Activated T-helper 1 cell treated with anti-CD3 and anti-CD28 coated beads, Interleukin-12 subunit alpha, Interleukin-12 subunit beta, Interleukin-2, Interleukin-4 antibody, amounts not matched to agents 30 ng/mL and 10 ng/mL and 1 ng/mL, durations not matched to agents 14 hours and 24 hours and 36 hours (primary cell): ENCODE measurements at regions of chr9 and their contacts with region 1.

Region 1: GRCh38 chr9:20319641-20320337 is 302.5 kb downstream of the MLLT3 start:
- DNase-seq: peak; percentile 37
- H3K4me3 Mint-ChIP-seq: peak overlapping the region; percentile 35
- H3K27ac Mint-ChIP-seq: peak overlapping the region; percentile 91
- H3K4me1 Mint-ChIP-seq: peaks cover 91% of the 10 kb centered on the region
- H3K27me3 Mint-ChIP-seq: no peaks in the 10 kb centered on the region

Region 2: DNA sequence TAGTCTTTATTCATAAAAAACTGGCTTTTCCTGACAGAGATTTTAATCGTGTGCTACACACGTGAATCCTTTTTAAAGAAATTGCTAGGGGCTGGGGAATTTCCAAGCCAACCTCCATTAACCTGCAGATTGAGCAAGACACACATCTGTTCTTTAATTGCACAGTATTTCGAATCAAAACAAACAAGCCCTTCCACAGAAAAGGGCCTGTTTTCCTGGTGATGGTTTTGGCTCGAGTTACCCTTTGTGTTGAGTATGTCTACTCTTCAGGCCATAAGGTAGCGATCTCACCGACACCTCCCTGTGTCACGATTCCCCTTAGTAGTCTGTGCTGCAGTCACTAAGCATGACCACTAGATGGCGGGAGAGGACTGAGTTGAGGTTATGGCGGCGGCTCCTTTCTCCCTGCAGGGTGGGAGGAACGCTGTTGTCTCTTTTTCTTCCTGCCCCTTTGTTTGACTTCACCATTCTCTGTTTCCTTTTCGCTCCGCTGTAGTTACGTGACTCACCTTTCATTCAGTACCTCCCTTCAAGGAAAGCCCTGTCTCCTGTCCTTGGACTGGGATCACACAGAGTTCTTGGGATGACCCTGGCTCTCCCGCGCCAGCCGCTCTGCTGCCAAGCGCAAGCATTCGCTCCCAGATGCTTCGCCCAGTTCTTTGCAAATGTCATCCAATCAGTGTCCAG is 393.8 kb before region 1 on chr9:
- intact Hi-C with region 1: loop called (anchors 5 kb)
- DNase-seq: peak; percentile 79
- H3K4me3 Mint-ChIP-seq: peak overlapping the region; percentile 65
- H3K27ac Mint-ChIP-seq: peak overlapping the region; percentile 2
- H3K4me1 Mint-ChIP-seq: peaks cover 28% of the 10 kb centered on the region
- H3K27me3 Mint-ChIP-seq: peaks cover 2% of the 10 kb centered on the region

Region 3: GRCh38 chr9:20043035-20043434 is 276.8 kb before region 1 on chr9:
- intact Hi-C with region 1: loop called (anchors 5 kb)
- DNase-seq: no peak
- H3K4me3 Mint-ChIP-seq: peak overlapping the region; percentile 78
- H3K27ac Mint-ChIP-seq: peak overlapping the region; percentile 79
- H3K4me1 Mint-ChIP-seq: peaks cover 45% of the 10 kb centered on the region
- H3K27me3 Mint-ChIP-seq: no peaks in the 10 kb centered on the region

Region 4: GRCh38 chr9:20256284-20256948 is 63.4 kb before region 1 on chr9:
- intact Hi-C with region 1: loop called (anchors 2 kb)
- DNase-seq: no peak
- H3K4me3 Mint-ChIP-seq: no peak overlapping the region
- H3K27ac Mint-ChIP-seq: peak overlapping the region; percentile 11
- H3K4me1 Mint-ChIP-seq: peaks cover 40% of the 10 kb centered on the region
- H3K27me3 Mint-ChIP-seq: no peaks in the 10 kb centered on the region

Region 5: GRCh38 chr9:20280330-20280729 is 39.5 kb before region 1 on chr9:
- intact Hi-C with region 1: no loop called
- DNase-seq: no peak
- H3K4me3 Mint-ChIP-seq: no peak overlapping the region
- H3K27ac Mint-ChIP-seq: no peak overlapping the region
- H3K4me1 Mint-ChIP-seq: peaks cover 10% of the 10 kb centered on the region
- H3K27me3 Mint-ChIP-seq: no peaks in the 10 kb centered on the region

Region 6: GRCh38 chr9:20552874-20553575 is 233.2 kb after region 1 on chr9:
- intact Hi-C with region 1: loop called (anchors 5 kb)
- DNase-seq: peak; percentile 1
- H3K4me3 Mint-ChIP-seq: peak overlapping the region; percentile 59
- H3K27ac Mint-ChIP-seq: peak overlapping the region; percentile 64
- H3K4me1 Mint-ChIP-seq: peaks cover 76% of the 10 kb centered on the region
- H3K27me3 Mint-ChIP-seq: no peaks in the 10 kb centered on the region

Region 7: GRCh38 chr9:21031091-21031807 is 711.5 kb after region 1 on chr9 and contains the start of gene HACD4:
- intact Hi-C with region 1: loop called (anchors 5 kb)
- DNase-seq: peak; percentile 67
- H3K4me3 Mint-ChIP-seq: peak within 1 kb of the TSS; percentile 63
- H3K27ac Mint-ChIP-seq: peak within 1 kb of the TSS; percentile 27
- H3K4me1 Mint-ChIP-seq: peaks cover 23% of the 10 kb centered on the region
- H3K27me3 Mint-ChIP-seq: no peaks in the 10 kb centered on the region
- total RNA-seq, gene HACD4: 2.7 and 3.0 TPM in 2 replicates